HCT116 (cell line): ENCODE measurements at regions of chr19 and their contacts with region 1.

Region 1: GRCh38 chr19:42244347-42245220 is 2.2 kb upstream of the GSK3A start:
- DNase-seq: peak; percentile 93
- ATAC-seq: peak; percentile 40
- H3K4me3 ChIP-seq: peak overlapping the region; percentile 69 to 93
- H3K27ac ChIP-seq: peak overlapping the region; percentile 78
- H3K4me1 ChIP-seq: peaks cover 13 to 45% of the 10 kb centered on the region in 2 experiments
- H3K27me3 ChIP-seq: no peaks in the 10 kb centered on the region
- CTCF ChIP-seq: peak; percentile 51 to 82 (median 65)
- POLR2A ChIP-seq: peak; percentile 63
- RAD21 ChIP-seq: peak; percentile 57

Region 2: DNA sequence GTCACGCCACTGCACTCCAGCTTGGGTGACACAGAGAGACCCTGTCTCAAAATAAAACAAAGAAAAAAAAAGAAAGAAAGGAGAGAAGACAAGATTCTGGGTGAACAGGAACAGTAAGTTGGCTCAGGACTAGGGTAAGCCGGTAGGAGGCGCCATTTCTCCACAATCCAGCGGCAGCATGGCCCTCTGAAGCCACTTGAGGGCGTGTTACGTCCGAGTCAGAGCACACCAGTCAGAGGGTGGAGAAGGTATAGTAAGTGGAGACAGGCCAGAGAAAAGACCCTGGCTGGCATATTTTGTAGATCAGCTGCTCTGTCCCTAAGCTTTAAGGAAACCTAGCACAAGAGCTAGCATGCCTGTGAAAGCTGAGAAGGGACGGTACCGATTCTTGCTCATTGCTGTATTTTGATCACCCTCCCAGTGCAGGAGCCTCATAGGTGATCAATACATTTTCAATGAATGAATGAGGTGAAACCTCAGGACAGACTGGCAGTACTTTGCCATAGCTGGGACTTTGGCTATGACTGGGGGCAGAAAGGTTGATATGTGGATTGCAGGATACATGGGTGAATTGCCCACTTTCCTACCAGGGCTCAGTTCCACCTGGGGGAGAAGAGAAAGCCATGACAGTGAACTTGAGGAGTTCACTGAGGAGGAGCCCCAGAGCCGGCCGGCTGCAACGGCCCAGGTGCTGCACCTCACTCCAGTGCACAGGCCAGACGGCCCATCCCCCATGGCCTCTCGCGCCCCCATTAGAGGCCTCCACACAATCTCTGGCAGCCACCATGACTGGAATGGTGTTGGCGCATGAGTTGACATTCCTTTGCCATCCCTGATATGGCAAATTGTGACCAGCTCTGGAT is 135.8 kb before region 1 on chr19:
- CTCF ChIA-PET with region 1: interaction called, 8 read pairs
- POLR2A ChIA-PET with region 1: interaction called, 5 read pairs
- RAD21 ChIA-PET with region 1: no interaction called
- intact Hi-C with region 1: loop called (anchors 1 kb)
- DNase-seq: peak; percentile 83
- ATAC-seq: peak; percentile 91
- H3K4me3 ChIP-seq: no peak overlapping the region
- H3K27ac ChIP-seq: no peak overlapping the region
- H3K4me1 ChIP-seq: peaks cover 14 to 27% of the 10 kb centered on the region in 2 experiments
- H3K27me3 ChIP-seq: peaks cover 16% of the 10 kb centered on the region; the same call in 1 of the 2 replicates
- CTCF ChIP-seq: peak; percentile 100
- POLR2A ChIP-seq: no peak
- RAD21 ChIP-seq: peak; percentile 100

Region 3: GRCh38 chr19:42219812-42220750 is 24.5 kb before region 1 on chr19 and contains the start of gene ZNF526:
- CTCF ChIA-PET with region 1: interaction called, 4 read pairs
- POLR2A ChIA-PET with region 1: interaction called, 11 read pairs
- RAD21 ChIA-PET with region 1: no interaction called
- intact Hi-C with region 1: no loop called
- DNase-seq: peak; percentile 93
- ATAC-seq: peak; percentile 84
- H3K4me3 ChIP-seq: peak within 1 kb of the TSS; percentile 81 to 98
- H3K27ac ChIP-seq: peak within 1 kb of the TSS; percentile 91
- H3K4me1 ChIP-seq: peaks cover 17 to 38% of the 10 kb centered on the region in 2 experiments
- H3K27me3 ChIP-seq: no peaks in the 10 kb centered on the region
- CTCF ChIP-seq: no peak
- POLR2A ChIP-seq: peak; percentile 64
- RAD21 ChIP-seq: no peak
- total RNA-seq, gene ZNF526: 13.1 TPM

Region 4: DNA sequence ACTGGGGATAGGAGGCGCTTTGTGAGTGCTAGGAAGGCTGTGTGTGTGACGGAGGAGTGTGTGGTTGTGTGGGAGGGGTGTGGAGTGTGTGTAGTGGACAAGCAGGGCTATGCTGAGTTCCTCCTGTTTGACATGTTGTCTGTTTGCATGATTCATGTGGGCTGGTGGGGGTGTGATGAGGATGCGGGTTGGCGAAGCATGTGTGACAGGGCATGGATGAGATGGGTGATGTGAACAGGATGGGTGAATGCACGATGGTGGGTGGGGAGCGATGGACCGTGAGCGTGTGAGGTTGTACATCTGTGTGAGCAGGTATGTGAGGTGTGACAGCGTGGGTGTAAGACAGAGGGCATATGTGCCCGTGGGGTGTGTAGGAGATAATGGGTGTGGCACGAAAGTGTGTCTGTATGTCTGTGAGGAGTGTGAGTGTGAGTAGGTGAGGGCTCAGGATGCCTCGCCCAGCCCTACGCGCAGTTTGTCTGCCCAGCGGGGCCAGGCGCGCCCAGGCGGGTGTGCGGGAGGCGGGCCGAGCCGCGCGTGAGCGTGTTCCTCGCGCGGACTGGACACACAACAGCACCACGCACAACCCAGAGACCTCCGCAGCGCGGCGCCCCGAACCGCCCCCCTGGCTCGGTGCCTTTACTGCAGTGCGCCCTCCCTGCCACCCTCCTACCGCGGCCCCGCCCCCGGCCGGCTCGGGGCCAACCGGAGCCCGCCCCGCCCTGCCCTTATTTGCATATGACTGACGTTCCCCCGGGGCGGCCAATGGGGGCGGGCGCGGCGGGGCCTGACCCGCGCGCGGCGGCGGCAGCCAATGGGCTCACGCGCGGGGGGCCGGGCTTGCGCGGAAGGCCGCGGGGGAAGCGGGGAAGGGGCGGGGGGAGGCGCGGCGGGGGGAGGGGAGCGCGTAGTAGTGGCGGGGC is 38.8 kb after region 1 on chr19:
- CTCF ChIA-PET with region 1: interaction called, 63 read pairs
- POLR2A ChIA-PET with region 1: interaction called, 19 read pairs
- RAD21 ChIA-PET with region 1: interaction called, 7 to 9 read pairs
- intact Hi-C with region 1: loop called (anchors 1 kb)
- DNase-seq: peak; percentile 69
- ATAC-seq: peak; percentile 73
- H3K4me3 ChIP-seq: peak overlapping the region; percentile 29 to 59
- H3K27ac ChIP-seq: peak overlapping the region; percentile 94
- H3K4me1 ChIP-seq: peaks cover 41 to 69% of the 10 kb centered on the region in 2 experiments
- H3K27me3 ChIP-seq: no peaks in the 10 kb centered on the region
- CTCF ChIP-seq: no peak
- POLR2A ChIP-seq: no peak
- RAD21 ChIP-seq: no peak

Region 5: DNA sequence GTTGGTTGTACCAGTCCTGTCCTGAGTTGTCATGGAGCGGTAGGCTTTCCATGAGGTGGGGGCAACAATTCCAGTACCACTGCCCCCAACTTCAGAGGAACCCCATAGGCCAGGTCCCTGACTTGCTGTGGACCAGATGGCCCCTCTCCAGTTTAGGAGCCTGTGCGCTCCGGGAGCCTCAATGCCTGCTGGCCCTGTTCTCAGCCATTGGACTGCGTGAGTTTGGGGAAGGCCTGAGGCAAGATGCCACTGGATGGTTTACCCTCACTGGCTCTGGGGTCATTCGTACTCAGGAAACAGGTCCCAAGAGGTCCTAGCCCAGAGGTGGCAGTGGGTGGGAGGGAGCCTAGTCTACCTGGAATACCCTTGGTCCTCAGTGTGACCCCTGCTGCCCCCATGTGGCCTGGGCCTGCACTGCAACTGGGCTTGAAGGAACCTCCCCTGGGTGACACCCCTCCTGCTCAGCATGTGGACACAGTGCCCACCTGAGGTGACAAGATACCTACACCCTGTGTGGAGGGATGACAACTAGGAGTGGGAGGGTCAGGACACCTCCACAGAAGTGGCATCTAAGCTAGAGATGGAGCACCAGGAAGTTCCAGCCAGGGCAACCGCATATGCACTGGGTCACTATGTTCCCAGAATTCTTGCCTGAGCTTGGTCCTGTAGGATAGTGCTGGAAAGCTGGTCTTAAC is 51.4 kb after region 1 on chr19:
- CTCF ChIA-PET with region 1: interaction called, 26 read pairs
- POLR2A ChIA-PET with region 1: interaction called, 7 read pairs
- RAD21 ChIA-PET with region 1: no interaction called
- intact Hi-C with region 1: loop called (anchors 2 kb)
- DNase-seq: peak; percentile 61
- ATAC-seq: peak; percentile 85
- H3K4me3 ChIP-seq: no peak overlapping the region
- H3K27ac ChIP-seq: peak overlapping the region; percentile 52
- H3K4me1 ChIP-seq: peaks cover 19 to 27% of the 10 kb centered on the region in 2 experiments
- H3K27me3 ChIP-seq: no peaks in the 10 kb centered on the region
- CTCF ChIP-seq: peak; percentile 85 to 99 (median 96)
- POLR2A ChIP-seq: no peak
- RAD21 ChIP-seq: peak; percentile 77

Region 6: GRCh38 chr19:42380155-42380554 is 135.6 kb after region 1 on chr19:
- CTCF ChIA-PET with region 1: no interaction called
- POLR2A ChIA-PET with region 1: no interaction called
- RAD21 ChIA-PET with region 1: no interaction called
- intact Hi-C with region 1: no loop called
- DNase-seq: no peak
- ATAC-seq: no peak
- H3K4me3 ChIP-seq: no peak overlapping the region
- H3K27ac ChIP-seq: no peak overlapping the region
- H3K4me1 ChIP-seq: peaks cover 0 to 6% of the 10 kb centered on the region in 2 experiments; a peak in 2 of 4 replicates
- H3K27me3 ChIP-seq: no peaks in the 10 kb centered on the region
- CTCF ChIP-seq: no peak
- POLR2A ChIP-seq: no peak
- RAD21 ChIP-seq: no peak

Region 7: DNA sequence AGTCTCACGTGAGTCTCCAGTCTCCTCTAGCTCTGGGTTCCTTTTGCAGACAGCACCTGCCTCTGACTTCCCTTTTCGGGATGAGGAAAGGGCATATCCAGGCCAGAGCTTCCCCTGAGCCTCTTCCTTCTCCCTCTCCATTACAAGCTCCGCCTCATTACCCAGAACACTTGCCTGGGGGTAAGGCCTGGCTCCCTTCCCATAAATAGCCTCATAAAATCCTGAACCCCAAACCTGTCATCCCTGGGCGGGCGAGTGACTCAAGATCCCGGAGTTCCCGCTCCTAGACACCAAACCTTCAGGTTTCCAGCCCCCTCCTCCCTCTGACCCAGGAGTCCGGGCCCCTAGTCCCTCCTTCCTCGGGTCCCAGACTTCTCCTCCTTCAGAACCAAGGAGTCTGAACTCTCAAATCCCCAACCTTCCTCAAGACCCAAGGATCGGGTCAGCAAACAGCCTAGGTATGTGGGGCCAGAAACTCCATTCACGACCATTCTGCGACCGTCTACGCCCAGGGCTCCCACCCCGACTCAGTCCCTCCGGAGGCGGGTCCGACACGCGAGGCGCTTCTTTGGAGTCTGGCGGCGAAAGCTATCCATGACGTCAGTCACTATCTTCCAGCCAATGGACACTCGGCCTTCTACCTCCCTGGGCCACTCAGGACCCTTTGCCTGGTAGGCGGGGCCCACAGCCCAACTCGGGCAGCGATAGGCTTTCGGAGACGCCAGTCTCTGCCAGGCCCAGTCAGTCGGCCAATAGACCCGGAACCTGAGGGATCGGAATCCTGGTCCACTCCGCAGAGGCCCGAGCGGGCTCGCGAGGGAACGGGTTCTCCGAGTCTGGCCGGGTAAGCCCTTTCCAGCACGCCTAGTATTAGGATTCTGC is 152.0 kb after region 1 on chr19:
- CTCF ChIA-PET with region 1: interaction called, 4 read pairs
- POLR2A ChIA-PET with region 1: interaction called, 4 read pairs
- RAD21 ChIA-PET with region 1: no interaction called
- intact Hi-C with region 1: loop called (anchors 5 kb)
- DNase-seq: peak; percentile 98
- ATAC-seq: peak; percentile 95
- H3K4me3 ChIP-seq: peak overlapping the region; percentile 88 to 90
- H3K27ac ChIP-seq: peak overlapping the region; percentile 82
- H3K4me1 ChIP-seq: peaks cover 10 to 39% of the 10 kb centered on the region in 2 experiments
- H3K27me3 ChIP-seq: no peaks in the 10 kb centered on the region
- CTCF ChIP-seq: no peak
- POLR2A ChIP-seq: peak; percentile 94
- RAD21 ChIP-seq: no peak

Region 8: GRCh38 chr19:42697884-42698283 is 453.3 kb after region 1 on chr19:
- CTCF ChIA-PET with region 1: no interaction called
- POLR2A ChIA-PET with region 1: no interaction called
- RAD21 ChIA-PET with region 1: no interaction called
- intact Hi-C with region 1: no loop called
- DNase-seq: no peak
- ATAC-seq: no peak
- H3K4me3 ChIP-seq: no peak overlapping the region
- H3K27ac ChIP-seq: no peak overlapping the region
- H3K4me1 ChIP-seq: no peaks in the 10 kb centered on the region
- H3K27me3 ChIP-seq: peaks cover under 1% of the 10 kb centered on the region
- CTCF ChIP-seq: no peak
- POLR2A ChIP-seq: no peak
- RAD21 ChIP-seq: no peak